A549 (cell line): ENCODE measurements at regions of chr5 and their contacts with region 1.

Region 1: DNA sequence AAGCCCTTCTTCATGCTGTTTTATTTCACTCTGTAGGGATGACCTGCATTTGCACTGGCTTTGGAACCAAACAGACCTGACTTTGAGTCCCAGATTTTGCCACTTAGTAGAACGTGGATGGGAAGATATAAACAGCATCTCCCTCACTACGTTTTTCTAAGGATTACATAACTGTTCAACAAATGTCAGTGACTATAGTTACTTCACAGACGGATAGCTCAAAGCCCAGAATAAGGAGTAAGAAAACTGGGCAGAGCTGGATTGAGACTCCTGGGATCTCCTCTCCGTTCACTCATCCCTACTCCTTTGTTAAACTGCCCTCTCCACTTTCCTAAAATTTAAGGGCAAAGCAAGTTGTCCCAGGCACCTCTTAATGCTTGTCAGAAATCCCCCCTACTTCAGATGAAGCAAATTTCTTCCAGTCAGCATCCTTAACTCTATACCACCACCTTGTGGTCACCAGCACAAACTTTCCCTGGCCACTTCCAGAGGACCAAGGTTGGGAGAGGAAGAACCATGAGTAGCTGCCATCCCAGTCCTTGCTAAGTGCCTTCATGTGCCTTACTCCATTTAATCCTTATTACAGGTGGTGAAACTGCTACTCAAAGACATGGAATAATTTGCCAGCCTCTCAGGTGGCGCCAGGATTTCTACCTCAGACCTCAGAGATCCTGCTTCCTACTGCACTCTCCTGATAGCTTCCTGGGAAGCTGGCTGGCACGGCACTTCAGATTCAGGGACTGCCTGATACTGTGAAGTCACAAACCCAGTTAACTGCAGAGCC is 38.4 kb downstream of the EGR1 start:
- DNase-seq: peak; percentile 67 to 86
- ATAC-seq: peak; percentile 71 to 82
- H3K4me3 ChIP-seq: no peak overlapping the region
- H3K27ac ChIP-seq: no peak overlapping the region
- H3K4me1 ChIP-seq: peaks cover 29% of the 10 kb centered on the region; the same call in 2 of the 3 replicates
- CTCF ChIP-seq: peak; percentile 84
- EP300 ChIP-seq: no peak
- POLR2A ChIP-seq: no peak
- RAD21 ChIP-seq: peak; percentile 73 to 76

Region 2: DNA sequence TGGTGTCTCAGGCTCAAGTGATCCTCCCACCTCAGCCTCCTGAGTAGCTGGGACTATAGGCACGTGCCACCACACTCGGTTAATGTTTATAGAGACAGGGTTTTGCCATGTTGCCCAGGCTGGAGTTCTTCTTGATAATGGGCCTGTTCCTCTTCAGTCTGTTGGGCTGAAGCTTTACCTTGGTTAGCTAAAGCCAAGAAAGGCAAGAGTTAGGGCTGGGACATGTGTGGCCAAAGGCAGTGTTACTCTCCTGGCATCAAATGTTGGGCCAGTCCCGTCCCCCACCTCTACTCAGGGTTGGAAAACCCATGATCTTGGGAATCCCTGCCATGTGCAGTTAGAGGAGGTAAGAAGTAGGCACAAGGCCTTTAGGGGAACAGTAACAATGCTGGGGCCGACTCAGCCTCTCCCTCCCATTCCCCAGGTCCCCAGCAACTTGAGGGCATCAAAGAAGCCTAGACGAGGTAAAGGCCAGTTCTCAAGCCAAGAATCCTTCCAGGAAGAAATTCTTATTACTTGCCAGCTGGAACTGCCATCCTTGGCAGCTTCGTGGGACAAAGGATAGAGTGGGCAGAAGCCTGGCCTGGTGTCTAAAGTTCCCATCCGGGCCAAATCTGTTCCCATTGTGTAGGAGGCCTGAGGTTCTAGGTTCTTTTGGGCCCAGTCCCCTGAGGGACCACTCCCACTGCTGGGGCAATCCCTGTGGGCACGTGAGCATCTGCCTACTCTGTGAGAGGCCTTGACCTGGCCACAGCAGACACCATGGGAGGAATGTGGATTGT is 33.9 kb before region 1 on chr5:
- CTCF ChIA-PET with region 1: interaction called, 199 read pairs
- POLR2A ChIA-PET with region 1: interaction called, 34 read pairs
- DNase-seq: peak; percentile 35 to 94
- ATAC-seq: peak; percentile 37 to 52
- H3K4me3 ChIP-seq: no peak overlapping the region
- H3K27ac ChIP-seq: no peak overlapping the region
- H3K4me1 ChIP-seq: peaks cover 6% of the 10 kb centered on the region; the same call in 2 of the 3 replicates
- CTCF ChIP-seq: no peak
- EP300 ChIP-seq: no peak
- POLR2A ChIP-seq: no peak
- RAD21 ChIP-seq: no peak

Region 3: GRCh38 chr5:138491669-138492559 is 11.8 kb before region 1 on chr5:
- CTCF ChIA-PET with region 1: interaction called, 27 read pairs
- POLR2A ChIA-PET with region 1: no interaction called
- DNase-seq: peak; percentile 54 to 69
- ATAC-seq: peak; percentile 81 to 86
- H3K4me3 ChIP-seq: peak overlapping the region; percentile 50
- H3K27ac ChIP-seq: peak overlapping the region; percentile 70 to 88
- H3K4me1 ChIP-seq: peaks cover 9% of the 10 kb centered on the region; the same call in 1 of the 3 replicates
- CTCF ChIP-seq: no peak
- EP300 ChIP-seq: no peak
- POLR2A ChIP-seq: no peak
- RAD21 ChIP-seq: no peak

Region 4: DNA sequence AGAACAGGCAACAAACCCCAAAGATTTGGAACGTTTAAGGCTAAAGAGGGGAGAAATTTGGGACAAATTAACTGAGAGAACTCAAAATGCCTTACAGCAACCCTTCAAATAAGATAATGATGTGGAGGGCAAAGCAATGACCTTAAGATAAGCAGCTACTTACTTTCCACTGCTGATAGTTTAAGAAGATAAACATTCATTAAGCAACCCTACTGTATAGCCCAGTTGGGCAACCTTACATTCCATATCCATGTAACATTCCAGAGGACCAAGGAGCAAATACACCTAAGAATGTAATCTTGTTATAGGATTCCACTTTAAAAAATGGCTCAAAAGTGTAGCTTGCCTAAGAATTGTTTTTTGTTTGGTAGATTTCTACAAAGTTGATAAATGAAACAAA is 24.5 kb after region 1 on chr5:
- CTCF ChIA-PET with region 1: interaction called, 21 read pairs
- POLR2A ChIA-PET with region 1: no interaction called
- DNase-seq: no peak
- ATAC-seq: peak in 1 of 2 experiments; percentile 20; a peak in 2 of 6 replicates
- H3K4me3 ChIP-seq: no peak overlapping the region
- H3K27ac ChIP-seq: no peak overlapping the region
- H3K4me1 ChIP-seq: peaks cover 19% of the 10 kb centered on the region; the same call in 2 of the 3 replicates
- CTCF ChIP-seq: no peak
- EP300 ChIP-seq: no peak
- POLR2A ChIP-seq: no peak
- RAD21 ChIP-seq: no peak